Activated T-helper 2 cell treated with anti-CD3 and anti-CD28 coated beads, Interferon-gamma antibody, Interleukin-2, Interleukin-4, amounts not matched to agents 10 μg/mL and 5 μg/mL and 100 μg/mL, durations not matched to agents 14 hours and 24 hours and 36 hours (primary cell): ENCODE measurements at regions of chr11 and their contacts with region 1.

Region 1: DNA sequence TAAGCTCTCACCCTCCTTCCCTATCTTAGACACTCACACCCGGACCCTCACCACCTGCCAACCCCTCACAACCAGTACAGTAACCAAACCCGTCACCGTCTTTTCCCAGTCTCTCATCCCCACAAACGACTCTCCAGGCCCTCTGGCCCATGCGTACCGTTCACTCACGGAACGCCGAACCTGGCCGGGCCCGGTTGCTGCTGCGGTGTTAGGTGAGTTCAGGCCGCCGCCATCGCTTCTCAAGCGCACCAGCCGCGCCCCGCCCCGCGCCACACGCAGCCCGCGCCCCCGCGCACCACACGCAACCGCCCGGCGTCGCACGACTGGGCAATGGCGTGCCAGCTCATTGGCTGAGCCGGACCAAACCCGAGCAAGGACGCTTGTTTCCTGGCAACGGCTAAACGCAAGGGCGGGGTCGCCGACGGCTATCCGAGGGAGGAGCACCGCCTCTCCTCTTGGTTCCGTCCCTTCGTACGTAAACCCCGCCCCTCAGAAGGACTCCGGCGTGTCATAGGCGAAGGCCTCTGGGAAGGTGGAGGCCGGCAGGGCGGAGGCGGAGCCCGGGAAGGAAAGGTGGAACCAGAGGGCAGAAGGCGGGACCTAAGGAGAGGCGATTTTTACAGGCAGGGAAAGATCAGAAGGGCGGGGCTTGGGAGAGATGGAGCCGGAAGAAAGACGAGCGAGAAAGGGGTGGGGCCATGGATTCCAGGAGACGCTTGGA is at the start of gene FHIP1B:
- DNase-seq: peak; percentile 100
- H3K4me3 Mint-ChIP-seq: peak within 1 kb of the TSS; percentile 97
- H3K27ac Mint-ChIP-seq: peak within 1 kb of the TSS; percentile 95
- H3K4me1 Mint-ChIP-seq: peaks cover 38% of the 10 kb centered on the region
- H3K27me3 Mint-ChIP-seq: no peaks in the 10 kb centered on the region
- total RNA-seq, gene FHIP1B: 17.6 and 17.9 TPM in 2 replicates

Region 2: DNA sequence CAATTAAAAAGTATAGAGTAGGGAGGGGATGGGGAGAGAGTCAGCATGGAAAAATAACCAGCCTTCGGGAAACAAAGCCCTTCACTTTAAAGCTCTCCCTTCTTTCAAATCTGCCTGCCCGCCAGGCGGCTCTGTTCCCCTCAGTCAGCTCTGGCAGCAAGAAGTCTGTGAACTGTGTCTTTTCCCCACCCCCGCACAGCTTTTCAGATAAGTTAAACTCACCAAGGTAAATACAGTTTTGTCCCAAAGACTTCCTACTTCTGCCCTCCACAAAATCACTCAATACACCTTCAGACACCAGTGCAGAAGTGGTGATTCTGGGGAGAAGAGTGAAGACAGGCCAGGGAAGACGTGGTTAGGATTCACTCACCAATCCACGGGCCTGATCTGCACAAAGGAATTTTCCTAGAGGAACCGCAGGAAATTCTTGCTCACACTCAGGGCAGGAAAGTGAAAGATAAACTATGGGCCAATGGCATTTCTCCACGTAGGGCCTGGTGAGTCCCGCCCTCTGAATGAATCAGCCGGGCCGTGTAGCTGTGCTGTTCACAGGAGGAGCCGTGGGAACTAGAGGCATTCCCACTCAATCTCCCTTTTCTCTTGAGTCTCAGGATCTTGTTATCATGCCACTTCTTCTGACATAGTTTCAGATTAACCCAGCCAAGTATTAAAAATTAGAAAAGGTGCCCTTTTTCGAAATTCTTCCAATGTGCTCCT is 549.7 kb before region 1 on chr11 and contains the start of gene TRIM5:
- intact Hi-C with region 1: loop called (anchors 10 kb)
- DNase-seq: peak; percentile 76
- H3K4me3 Mint-ChIP-seq: peak within 1 kb of the TSS; percentile 95
- H3K27ac Mint-ChIP-seq: peak within 1 kb of the TSS; percentile 96
- H3K4me1 Mint-ChIP-seq: peaks cover 31% of the 10 kb centered on the region
- H3K27me3 Mint-ChIP-seq: no peaks in the 10 kb centered on the region
- total RNA-seq, gene TRIM5: 12.4 and 14.1 TPM in 2 replicates

Region 3: GRCh38 chr11:6200975-6201374 is 33.6 kb before region 1 on chr11:
- intact Hi-C with region 1: loop called (anchors 1 kb)
- DNase-seq: no peak
- H3K4me3 Mint-ChIP-seq: no peak overlapping the region
- H3K27ac Mint-ChIP-seq: peak overlapping the region; percentile 52
- H3K4me1 Mint-ChIP-seq: peaks cover 43% of the 10 kb centered on the region
- H3K27me3 Mint-ChIP-seq: peaks cover 2% of the 10 kb centered on the region

Region 4: GRCh38 chr11:6353367-6353987 is 118.9 kb after region 1 on chr11:
- intact Hi-C with region 1: loop called (anchors 5 kb)
- DNase-seq: peak; percentile 44
- H3K4me3 Mint-ChIP-seq: no peak overlapping the region
- H3K27ac Mint-ChIP-seq: peak overlapping the region; percentile 34
- H3K4me1 Mint-ChIP-seq: peaks cover 45% of the 10 kb centered on the region
- H3K27me3 Mint-ChIP-seq: no peaks in the 10 kb centered on the region

Region 5: GRCh38 chr11:6481012-6481923 is 246.7 kb after region 1 on chr11 and contains the starts of genes ARFIP2 and TIMM10B:
- intact Hi-C with region 1: loop called (anchors 2 kb)
- DNase-seq: peak; percentile 97
- H3K4me3 Mint-ChIP-seq: peak within 1 kb of the TSS; percentile 88
- H3K27ac Mint-ChIP-seq: peak within 1 kb of the TSS; percentile 93
- H3K4me1 Mint-ChIP-seq: peaks cover 25% of the 10 kb centered on the region
- H3K27me3 Mint-ChIP-seq: no peaks in the 10 kb centered on the region
- total RNA-seq, gene ARFIP2: 46.8 and 48.6 TPM in 2 replicates
- total RNA-seq, gene TIMM10B: 42.9 and 43.0 TPM in 2 replicates